OCI-LY7 (cell line): ENCODE measurements at regions of chr20 and their contacts with region 1.

Region 1: GRCh38 chr20:60090631-60091030 is 132.4 kb downstream of the CDH26 start:
- DNase-seq: no peak
- H3K4me3 ChIP-seq: no peak overlapping the region
- H3K27ac ChIP-seq: no peak overlapping the region
- H3K4me1 ChIP-seq: no peaks in the 10 kb centered on the region
- CTCF ChIP-seq: no peak

Region 2: DNA sequence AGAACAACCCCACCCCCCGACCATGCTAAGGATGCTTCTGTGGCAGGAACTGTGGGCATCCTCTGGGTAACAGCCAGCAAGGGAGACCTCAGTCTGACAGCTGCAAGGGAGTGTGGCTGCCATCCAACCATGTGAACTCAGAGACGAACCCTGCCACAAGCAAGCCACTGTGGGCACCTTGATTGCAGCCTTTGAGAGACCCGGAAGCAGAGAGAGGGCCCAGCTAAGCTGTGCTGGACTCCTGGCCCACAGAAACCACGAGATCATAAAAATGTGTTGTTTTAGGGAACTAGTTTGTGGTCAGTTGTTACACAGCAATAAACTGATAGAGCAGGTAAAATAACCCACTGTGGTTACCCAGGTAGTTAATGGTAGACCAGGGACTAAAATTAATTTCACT is 282.2 kb after region 1 on chr20:
- CTCF ChIA-PET with region 1: no interaction called
- POLR2A ChIA-PET with region 1: interaction called, 10 read pairs
- intact Hi-C with region 1: no loop called
- DNase-seq: no peak
- H3K4me3 ChIP-seq: no peak overlapping the region
- H3K27ac ChIP-seq: no peak overlapping the region
- H3K4me1 ChIP-seq: no peaks in the 10 kb centered on the region
- CTCF ChIP-seq: no peak

Region 3: GRCh38 chr20:60491051-60491623 is 400.5 kb after region 1 on chr20:
- CTCF ChIA-PET with region 1: no interaction called
- POLR2A ChIA-PET with region 1: no interaction called
- intact Hi-C with region 1: no loop called
- DNase-seq: no peak
- H3K4me3 ChIP-seq: no peak overlapping the region
- H3K27ac ChIP-seq: no peak overlapping the region
- H3K4me1 ChIP-seq: no peaks in the 10 kb centered on the region
- CTCF ChIP-seq: no peak